ENCODE measurements at regions of chr5 and their contacts with region 1.

Region 1: DNA sequence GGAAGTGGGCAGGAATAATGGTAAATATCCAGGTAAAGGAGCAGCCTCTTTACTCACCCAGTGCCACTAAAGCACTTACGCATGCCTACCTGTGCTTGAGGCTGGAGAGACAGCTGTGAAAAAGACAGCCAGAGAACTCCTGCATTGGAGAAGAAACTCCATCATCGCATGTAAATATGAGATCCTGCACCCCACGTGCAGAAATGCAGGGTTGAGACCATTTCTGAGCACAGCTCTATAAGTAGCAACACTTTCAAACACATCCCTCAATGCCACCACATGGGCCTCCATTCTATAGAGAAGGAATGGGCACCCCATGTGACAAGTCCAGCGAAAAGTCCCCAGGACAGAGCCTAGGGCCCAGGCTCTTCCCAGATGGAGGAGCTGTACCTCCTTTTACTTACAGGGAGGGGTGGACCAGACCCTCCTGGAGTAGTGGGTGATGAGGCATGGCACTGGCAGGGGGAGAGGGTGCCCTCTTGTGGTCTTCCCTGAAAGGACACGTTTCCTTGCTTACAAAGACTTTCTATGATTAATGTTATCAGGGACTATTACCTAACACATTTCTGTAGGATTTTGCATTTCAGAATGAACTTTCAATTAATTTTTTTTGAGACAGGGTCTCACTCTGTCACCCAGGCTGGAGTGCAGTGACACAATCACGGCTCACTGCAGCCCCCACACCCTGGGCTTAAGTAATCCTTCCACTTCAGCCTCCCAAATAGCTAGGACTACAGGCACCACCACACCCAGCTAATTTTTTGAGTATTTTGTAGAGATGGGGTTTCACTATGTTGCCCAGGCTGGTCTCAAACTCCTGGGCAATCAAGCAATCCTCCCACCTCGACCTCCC is 55.3 kb upstream of the IL17B start:
- DNase-seq: no peak
- H3K4me3 ChIP-seq: no peak overlapping the region
- H3K27ac ChIP-seq: no peak overlapping the region
- H3K4me1 ChIP-seq: peaks cover 16% of the 10 kb centered on the region
- H3K27me3 ChIP-seq: no peaks in the 10 kb centered on the region
- CTCF ChIP-seq: peak; percentile 93

Region 2: DNA sequence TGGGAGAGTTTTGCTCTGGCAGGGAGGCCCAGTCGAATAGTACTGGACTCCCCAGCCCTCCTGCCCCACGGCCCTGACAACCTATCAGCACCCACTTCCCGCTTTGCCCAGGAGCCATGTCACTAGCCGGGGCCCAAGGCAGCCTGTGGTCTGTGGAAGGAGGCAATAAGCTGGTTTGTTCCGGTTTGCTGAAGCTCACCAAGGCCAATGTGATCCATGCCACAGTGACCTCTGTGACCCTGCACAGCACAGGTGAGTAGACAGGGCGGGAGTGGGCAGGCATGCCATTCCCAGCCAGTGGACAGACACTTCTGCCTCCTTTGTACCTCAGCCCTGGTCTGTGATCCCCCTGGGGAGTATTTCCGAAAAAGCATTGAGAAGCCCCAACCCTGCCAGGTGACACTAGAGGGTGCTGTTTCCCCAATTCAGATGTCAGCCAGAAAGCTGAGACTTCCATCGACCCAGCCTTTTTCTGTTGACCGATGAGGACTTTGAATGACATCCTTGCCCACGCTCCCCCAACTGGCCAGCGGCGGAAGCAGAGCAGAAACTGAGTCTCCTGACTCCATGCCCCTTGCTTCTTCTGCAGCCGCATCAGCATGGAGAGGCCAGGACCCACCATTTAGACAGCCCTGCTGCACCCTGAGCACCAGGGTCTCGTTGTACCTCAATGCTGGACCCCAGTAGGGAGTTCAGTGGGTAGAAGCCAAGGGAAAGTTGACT is 67.0 kb before region 1 on chr5:
- CTCF ChIA-PET with region 1: no interaction called
- dilution Hi-C with region 1: no loop called
- in situ Hi-C with region 1: loop called in 1 of 2 experiments (anchors 5 kb)
- intact Hi-C with region 1: loop called (anchors 1 kb)
- DNase-seq: peak; percentile 54
- H3K4me3 ChIP-seq: no peak overlapping the region
- H3K27ac ChIP-seq: no peak overlapping the region
- H3K4me1 ChIP-seq: no peaks in the 10 kb centered on the region
- H3K27me3 ChIP-seq: no peaks in the 10 kb centered on the region
- CTCF ChIP-seq: peak; percentile 77 to 85

Region 3: DNA sequence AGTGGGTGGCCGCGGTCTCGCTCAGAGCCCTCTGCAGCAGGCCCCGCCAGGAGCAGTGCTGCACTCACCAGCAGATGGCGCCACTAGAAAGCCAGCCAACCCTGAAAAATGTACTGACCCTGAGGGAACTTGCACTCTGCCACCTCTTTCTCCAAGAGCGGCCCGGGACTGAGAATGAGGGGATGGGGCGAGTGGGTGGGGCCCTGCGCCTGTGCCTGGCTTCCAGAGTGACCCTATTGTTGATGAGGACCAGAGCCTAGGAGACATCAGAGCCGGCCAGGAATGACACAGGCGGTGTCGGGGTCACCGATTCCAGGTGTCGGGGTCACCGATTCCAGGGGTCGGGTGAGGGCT is 52.4 kb before region 1 on chr5:
- CTCF ChIA-PET with region 1: no interaction called
- dilution Hi-C with region 1: no loop called
- in situ Hi-C with region 1: loop called in 1 of 2 experiments (anchors 5 kb)
- intact Hi-C with region 1: loop called (anchors 1 kb)
- DNase-seq: peak; percentile 49
- H3K4me3 ChIP-seq: no peak overlapping the region
- H3K27ac ChIP-seq: no peak overlapping the region
- H3K4me1 ChIP-seq: peaks cover 13% of the 10 kb centered on the region
- H3K27me3 ChIP-seq: no peaks in the 10 kb centered on the region
- CTCF ChIP-seq: peak; percentile 90 to 96

Region 4: GRCh38 chr5:149387081-149387631 is 47.2 kb before region 1 on chr5:
- CTCF ChIA-PET with region 1: no interaction called
- dilution Hi-C with region 1: no loop called
- in situ Hi-C with region 1: loop called in 1 of 2 experiments (anchors 5 kb)
- intact Hi-C with region 1: loop called (anchors 1 kb)
- DNase-seq: no peak
- H3K4me3 ChIP-seq: no peak overlapping the region
- H3K27ac ChIP-seq: no peak overlapping the region
- H3K4me1 ChIP-seq: no peaks in the 10 kb centered on the region
- H3K27me3 ChIP-seq: no peaks in the 10 kb centered on the region
- CTCF ChIP-seq: no peak